SK-N-SH (cell line): ENCODE measurements at regions of chr2 and their contacts with region 1.

Region 1: DNA sequence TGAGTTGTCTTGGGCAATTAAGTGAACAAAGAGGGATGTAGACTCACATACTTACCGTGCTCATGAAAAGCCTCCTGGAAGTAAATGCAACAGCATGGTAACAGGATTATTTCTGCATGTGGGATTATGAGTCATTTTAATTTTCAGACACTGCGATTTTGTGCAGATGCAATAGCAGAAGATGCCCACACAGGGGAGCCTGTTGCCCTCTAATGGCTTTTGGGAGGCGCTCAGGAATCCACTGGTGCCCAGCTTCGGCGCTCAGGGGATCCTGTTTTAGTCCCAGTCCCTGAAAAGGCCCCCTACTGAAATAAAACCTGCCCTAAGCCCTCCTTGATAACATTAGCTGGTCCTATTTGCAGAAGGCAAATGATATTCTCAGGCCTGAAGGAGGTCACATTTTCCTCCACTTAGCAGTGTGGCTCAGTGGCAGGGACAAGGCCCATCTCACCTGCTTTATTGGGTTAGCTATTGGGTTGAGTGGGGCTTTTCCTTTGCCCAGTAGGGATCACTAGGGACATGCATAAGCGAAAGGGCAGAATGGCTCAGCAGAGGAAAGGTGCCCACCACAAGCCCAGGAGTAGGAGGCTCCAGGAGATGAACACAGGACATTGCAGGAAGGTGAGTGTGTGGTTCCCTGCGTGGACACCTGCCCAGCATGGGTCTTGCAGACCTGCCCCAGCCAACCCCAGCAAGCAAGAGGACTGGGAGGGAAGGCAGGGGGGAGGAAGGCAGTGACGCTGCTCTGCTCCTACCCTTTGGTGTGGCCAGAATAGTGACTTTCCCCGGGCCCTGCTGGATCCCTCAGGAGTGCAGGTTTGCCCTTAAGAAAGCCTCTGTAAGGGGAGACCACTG is 26.5 kb upstream of the KCNS3 start:
- DNase-seq: peak; percentile 76
- H3K4me3 ChIP-seq: no peak overlapping the region; a peak in 1 of 4 replicates
- H3K27ac ChIP-seq: no peak overlapping the region
- H3K4me1 ChIP-seq: no peaks in the 10 kb centered on the region; a peak in 1 of 4 replicates
- H3K27me3 ChIP-seq: no peaks in the 10 kb centered on the region; the same call in 1 of the 2 replicates
- CTCF ChIP-seq: peak; percentile 95
- EP300 ChIP-seq: no peak
- RAD21 ChIP-seq: peak; percentile 98

Region 2: GRCh38 chr2:17867133-17867532 is 15.2 kb after region 1 on chr2:
- CTCF ChIA-PET with region 1: interaction called, 12 read pairs
- POLR2A ChIA-PET with region 1: no interaction called
- DNase-seq: no peak
- H3K4me3 ChIP-seq: no peak overlapping the region
- H3K27ac ChIP-seq: no peak overlapping the region
- H3K4me1 ChIP-seq: no peaks in the 10 kb centered on the region
- H3K27me3 ChIP-seq: no peaks in the 10 kb centered on the region
- CTCF ChIP-seq: no peak
- EP300 ChIP-seq: no peak
- RAD21 ChIP-seq: no peak

Region 3: DNA sequence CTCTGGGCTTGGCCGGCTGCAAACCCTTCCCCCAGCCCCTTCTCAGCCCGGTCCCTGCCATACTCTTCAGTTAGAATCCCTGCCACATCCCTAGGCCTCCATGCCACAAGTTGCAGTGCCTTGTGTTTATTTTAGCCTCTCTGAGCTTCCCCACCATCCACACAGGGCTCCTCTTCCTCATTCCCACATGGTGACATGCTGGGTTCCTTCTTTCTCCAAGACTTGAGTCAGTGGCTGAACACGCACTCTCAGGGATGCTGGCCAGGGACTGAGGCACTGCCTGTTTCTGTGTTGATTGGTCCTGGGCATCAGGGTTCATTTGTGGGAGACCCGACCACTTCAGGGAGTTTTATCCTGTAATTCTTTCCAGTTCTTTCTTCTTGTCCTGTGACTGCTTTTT is 82.8 kb after region 1 on chr2:
- CTCF ChIA-PET with region 1: no interaction called
- POLR2A ChIA-PET with region 1: no interaction called
- DNase-seq: no peak
- H3K4me3 ChIP-seq: no peak overlapping the region
- H3K27ac ChIP-seq: no peak overlapping the region
- H3K4me1 ChIP-seq: no peaks in the 10 kb centered on the region
- H3K27me3 ChIP-seq: no peaks in the 10 kb centered on the region
- CTCF ChIP-seq: no peak
- EP300 ChIP-seq: no peak
- RAD21 ChIP-seq: no peak

Region 4: GRCh38 chr2:18117592-18117991 is 265.6 kb after region 1 on chr2:
- CTCF ChIA-PET with region 1: interaction called, 10 read pairs
- POLR2A ChIA-PET with region 1: no interaction called
- DNase-seq: peak; percentile 19
- H3K4me3 ChIP-seq: no peak overlapping the region; a peak in 1 of 4 replicates
- H3K27ac ChIP-seq: no peak overlapping the region
- H3K4me1 ChIP-seq: peaks cover 0 to 10% of the 10 kb centered on the region in 2 experiments; a peak in 2 of 4 replicates
- H3K27me3 ChIP-seq: no peaks in the 10 kb centered on the region
- CTCF ChIP-seq: peak; percentile 34
- EP300 ChIP-seq: no peak
- RAD21 ChIP-seq: peak; percentile 64

Region 5: GRCh38 chr2:18178736-18179349 is 326.9 kb after region 1 on chr2:
- CTCF ChIA-PET with region 1: interaction called, 111 read pairs
- POLR2A ChIA-PET with region 1: no interaction called
- DNase-seq: peak; percentile 43
- H3K4me3 ChIP-seq: no peak overlapping the region; a peak in 1 of 4 replicates
- H3K27ac ChIP-seq: no peak overlapping the region
- H3K4me1 ChIP-seq: no peaks in the 10 kb centered on the region
- H3K27me3 ChIP-seq: peaks cover 7% of the 10 kb centered on the region; the same call in 1 of the 2 replicates
- CTCF ChIP-seq: peak; percentile 92
- EP300 ChIP-seq: no peak
- RAD21 ChIP-seq: peak; percentile 79